ENCODE measurements at regions of chr14 and their contacts with region 1.

Region 1: DNA sequence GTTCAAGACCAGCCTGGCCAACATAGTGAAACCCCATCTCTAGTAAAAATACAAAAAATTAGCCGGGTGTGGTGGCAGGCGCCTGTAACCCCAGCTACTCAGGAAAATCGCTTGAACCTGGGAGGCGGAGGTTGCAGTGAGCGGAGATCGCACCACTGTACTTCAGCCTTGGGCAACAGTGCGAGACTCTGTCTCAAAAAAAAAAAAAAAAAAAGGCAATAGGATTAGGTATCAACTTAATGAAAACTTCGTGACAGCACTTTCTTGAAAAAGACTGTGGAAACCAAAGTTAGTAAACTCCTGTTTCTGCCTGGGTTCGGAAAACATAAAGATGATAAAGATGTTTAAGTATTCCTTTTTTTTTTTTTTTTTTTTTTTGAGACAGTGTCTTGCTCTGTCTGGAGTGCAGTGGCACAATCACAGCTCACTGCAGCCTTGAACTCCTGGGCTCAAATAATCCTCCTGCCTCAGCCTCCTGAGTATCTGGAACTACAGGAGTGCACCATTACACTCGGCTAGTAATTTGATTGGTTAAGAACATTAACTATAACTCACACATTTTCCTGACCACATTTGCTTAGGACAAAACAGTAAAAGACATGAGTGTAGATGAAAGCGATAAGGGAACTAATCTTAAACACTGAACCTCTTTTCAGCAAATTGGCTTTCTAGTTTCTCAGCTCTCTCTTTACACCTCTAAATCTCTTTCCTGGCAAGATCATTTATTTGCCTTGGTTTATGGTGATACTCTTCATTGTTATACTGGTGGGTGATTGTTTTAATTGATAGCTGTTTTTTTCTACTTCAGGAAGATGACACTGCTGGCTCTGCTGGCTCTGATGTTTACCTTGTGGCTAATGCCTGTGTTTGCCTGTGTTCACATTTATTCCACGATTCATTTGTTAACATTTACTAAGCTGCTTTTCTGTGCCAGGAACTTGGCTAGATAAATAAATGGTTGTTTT is 15.8 kb downstream of the HIF1A start:
- DNase-seq: peak; percentile 69
- H3K4me3 ChIP-seq: peak overlapping the region in 1 of 8 donors; percentile 22
- H3K27ac ChIP-seq: peak overlapping the region in 6 of 8 donors; percentile 39 to 81 (median 72)
- H3K4me1 ChIP-seq: peaks cover 43 to 88% (median 80%) of the 10 kb centered on the region in 6 donors
- H3K27me3 ChIP-seq: no peaks in the 10 kb centered on the region
- CTCF ChIP-seq: no peak
- POLR2A ChIP-seq: no peak

Region 2: DNA sequence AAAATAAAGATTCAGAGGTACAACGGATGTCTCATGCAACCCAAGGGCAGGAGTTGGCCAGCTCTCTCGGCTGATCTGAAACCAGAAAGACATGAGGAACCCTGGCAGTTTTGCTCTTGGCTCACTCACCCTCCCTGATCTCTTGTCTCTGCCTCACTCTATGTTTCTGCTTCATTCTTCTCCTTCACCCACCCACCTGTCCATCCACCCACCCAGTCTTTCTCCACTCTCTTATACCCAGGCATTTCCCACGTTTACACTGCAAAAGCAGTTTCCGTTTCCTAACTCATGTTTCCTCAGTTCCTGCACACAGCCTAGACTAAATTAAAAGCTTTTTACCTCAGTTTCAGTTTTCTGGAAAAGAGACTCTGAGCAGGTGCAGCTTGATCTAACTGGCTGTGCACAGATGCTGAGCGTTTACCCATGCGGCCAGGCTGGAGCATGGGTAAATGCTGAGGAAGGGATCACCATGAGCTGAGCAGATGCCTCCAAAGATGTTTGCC is 232.1 kb before region 1 on chr14:
- intact Hi-C with region 1: no loop called
- DNase-seq: no peak
- H3K4me3 ChIP-seq: peak overlapping the region in 1 of 8 donors; percentile 63
- H3K27ac ChIP-seq: peak overlapping the region; percentile 84 to 97 (median 96)
- H3K4me1 ChIP-seq: peaks cover 57 to 98% (median 69%) of the 10 kb centered on the region in 6 donors
- H3K27me3 ChIP-seq: no peaks in the 10 kb centered on the region
- CTCF ChIP-seq: no peak
- POLR2A ChIP-seq: no peak

Region 3: DNA sequence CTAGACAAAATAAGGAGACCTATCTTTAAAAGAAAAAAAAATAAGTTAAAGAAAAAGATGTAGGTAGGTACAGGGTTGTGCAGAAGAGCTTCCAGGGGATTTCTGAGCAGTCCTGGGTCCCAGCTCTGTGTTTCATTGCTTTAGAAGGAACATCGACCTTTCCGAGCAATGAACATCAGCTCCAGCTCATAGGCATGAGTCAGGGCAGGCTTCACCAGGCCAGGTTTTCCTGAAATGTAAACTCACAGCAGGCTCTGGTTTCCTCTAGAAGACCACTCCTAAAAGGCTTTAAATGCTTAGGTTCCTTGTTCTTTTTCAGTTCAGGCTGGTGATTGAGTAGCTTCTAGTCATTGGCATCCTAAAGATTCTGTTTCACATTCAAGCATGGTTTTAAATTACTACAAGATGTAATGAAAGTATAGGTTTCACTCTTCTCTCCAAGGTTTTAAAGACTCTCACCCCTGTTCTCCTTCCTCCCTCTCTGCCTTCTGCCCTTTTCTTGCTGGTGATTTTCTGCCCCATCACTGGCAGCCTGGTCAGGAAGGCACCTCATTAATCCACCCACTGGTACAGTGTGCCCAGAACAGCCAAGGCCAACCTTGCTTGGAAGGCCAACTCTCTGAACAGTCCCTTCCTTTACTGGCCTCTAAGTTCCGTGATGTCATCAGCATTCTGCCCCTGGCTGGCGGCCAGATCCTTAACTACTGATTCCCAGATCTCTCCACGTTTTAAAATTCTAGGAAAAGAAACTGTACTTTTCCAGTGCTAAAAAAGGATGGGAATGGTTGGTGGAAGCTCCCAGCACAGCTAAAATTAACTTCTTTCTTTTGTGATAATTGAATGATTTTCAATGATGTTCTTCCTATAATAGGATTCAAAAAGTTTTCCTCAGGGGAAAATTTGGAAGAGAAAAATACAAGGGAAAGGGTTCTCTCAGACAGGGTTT is 125.3 kb before region 1 on chr14:
- intact Hi-C with region 1: loop called (anchors 10 kb)
- DNase-seq: peak; percentile 84
- H3K4me3 ChIP-seq: no peak overlapping the region
- H3K27ac ChIP-seq: peak overlapping the region; percentile 51 to 90 (median 80)
- H3K4me1 ChIP-seq: peaks cover 0 to 38% (median 24%) of the 10 kb centered on the region in 6 donors
- H3K27me3 ChIP-seq: no peaks in the 10 kb centered on the region
- CTCF ChIP-seq: no peak
- POLR2A ChIP-seq: no peak